ENCODE measurements at regions of chr19 and their contacts with region 1.

Region 1: DNA sequence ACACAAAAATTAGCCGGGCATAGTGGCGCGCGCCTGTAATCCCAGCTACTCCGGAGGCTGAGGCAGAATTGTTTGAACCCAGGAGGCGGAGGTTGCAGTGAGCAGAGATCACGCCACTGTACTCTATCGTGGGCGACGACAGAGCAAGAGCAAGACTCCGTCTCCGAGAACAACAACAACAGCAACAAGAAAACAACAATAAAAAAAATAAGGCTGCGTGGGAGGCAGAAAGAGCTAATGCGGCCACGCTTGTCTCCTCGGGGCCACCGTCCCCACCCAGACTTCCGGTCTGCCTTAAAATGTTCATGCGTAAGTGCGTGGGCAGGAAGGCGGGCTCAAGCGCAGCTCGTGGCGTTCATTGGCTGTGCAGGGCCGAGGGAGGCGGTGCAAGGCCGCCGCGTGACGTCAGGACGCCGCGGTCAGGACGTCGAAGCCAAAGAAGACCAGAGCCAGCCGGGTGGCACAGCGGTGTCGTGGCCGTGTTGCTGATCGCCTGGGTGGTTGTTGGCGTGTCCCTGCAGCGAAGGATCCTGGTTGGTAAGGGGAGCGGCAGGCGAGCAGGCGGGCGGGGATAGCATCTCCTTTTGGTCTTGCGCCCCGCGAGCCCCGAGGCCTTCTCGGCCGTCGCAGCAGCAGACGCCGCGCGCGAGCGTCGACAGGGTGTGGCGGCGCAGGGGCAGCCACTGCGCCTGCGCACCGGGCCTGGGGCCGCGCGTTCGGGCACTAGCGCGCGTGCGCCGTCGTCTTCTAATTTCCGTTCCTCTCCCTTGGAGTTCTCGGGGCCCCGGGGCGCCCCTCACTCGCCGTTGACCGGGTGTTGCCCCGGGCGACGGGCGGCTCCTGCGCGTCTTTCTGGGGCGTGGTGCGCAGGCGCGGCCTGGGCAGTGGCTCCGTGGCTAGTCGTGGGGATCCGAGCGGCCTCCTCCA is at the start of gene LENG8:
- DNase-seq: peak; percentile 98
- H3K4me3 ChIP-seq: peak within 1 kb of the TSS; percentile 83 to 98 (median 83)
- H3K27ac ChIP-seq: peak within 1 kb of the TSS; percentile 92 to 95 (median 95)
- H3K4me1 ChIP-seq: peaks cover 19 to 25% of the 10 kb centered on the region in 2 donors
- H3K27me3 ChIP-seq: no peaks in the 10 kb centered on the region
- CTCF ChIP-seq: peak in 2 of 6 experiments; percentile 12 to 13
- POLR2A ChIP-seq: peak; percentile 81 to 94
- total RNA-seq, gene LENG8: 124 to 219 (median 157) TPM

Region 2: DNA sequence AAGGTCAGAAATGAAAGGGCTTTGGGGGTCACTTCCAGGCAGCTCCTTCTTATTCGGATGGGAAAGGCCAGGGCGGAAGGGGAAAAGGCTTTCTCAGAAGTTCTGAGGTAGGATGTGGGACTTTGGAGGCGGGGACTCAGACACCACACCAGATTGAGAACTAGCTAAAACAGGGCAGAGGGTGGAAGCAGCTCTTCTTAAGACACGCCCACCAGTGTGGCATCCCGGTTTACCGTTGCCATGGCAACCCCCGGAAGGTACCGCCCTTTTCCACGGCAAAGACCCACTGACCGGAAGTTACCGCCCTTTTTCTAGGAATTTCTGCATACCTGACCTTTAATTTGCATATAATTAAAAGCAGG is 132.3 kb before region 1 on chr19:
- intact Hi-C with region 1: no loop called
- DNase-seq: no peak
- H3K4me3 ChIP-seq: no peak overlapping the region
- H3K27ac ChIP-seq: no peak overlapping the region
- H3K4me1 ChIP-seq: no peaks in the 10 kb centered on the region
- H3K27me3 ChIP-seq: no peaks in the 10 kb centered on the region
- CTCF ChIP-seq: no peak
- POLR2A ChIP-seq: no peak

Region 3: GRCh38 chr19:54463531-54464043 is 14.6 kb after region 1 on chr19 and contains the start of gene LENG9:
- intact Hi-C with region 1: loop called (anchors 2 kb)
- DNase-seq: peak; percentile 91 to 95
- H3K4me3 ChIP-seq: peak within 1 kb of the TSS; percentile 3 to 38 (median 10)
- H3K27ac ChIP-seq: peak within 1 kb of the TSS; percentile 81 to 91 (median 90)
- H3K4me1 ChIP-seq: peaks cover 14 to 28% of the 10 kb centered on the region in 2 donors
- H3K27me3 ChIP-seq: no peaks in the 10 kb centered on the region
- CTCF ChIP-seq: no peak
- POLR2A ChIP-seq: peak in 1 of 2 donors; percentile 64
- total RNA-seq, gene LENG9: 1.3 to 4.6 (median 3.2) TPM

Region 4: GRCh38 chr19:54541712-54542111 is 92.7 kb after region 1 on chr19:
- intact Hi-C with region 1: no loop called
- DNase-seq: no peak
- H3K4me3 ChIP-seq: no peak overlapping the region
- H3K27ac ChIP-seq: no peak overlapping the region
- H3K4me1 ChIP-seq: no peaks in the 10 kb centered on the region
- H3K27me3 ChIP-seq: no peaks in the 10 kb centered on the region
- CTCF ChIP-seq: no peak
- POLR2A ChIP-seq: no peak